Naive thymus-derived CD4-positive, alpha-beta T cell (primary cell): ENCODE measurements at regions of chr2 and their contacts with region 1.

Region 1: DNA sequence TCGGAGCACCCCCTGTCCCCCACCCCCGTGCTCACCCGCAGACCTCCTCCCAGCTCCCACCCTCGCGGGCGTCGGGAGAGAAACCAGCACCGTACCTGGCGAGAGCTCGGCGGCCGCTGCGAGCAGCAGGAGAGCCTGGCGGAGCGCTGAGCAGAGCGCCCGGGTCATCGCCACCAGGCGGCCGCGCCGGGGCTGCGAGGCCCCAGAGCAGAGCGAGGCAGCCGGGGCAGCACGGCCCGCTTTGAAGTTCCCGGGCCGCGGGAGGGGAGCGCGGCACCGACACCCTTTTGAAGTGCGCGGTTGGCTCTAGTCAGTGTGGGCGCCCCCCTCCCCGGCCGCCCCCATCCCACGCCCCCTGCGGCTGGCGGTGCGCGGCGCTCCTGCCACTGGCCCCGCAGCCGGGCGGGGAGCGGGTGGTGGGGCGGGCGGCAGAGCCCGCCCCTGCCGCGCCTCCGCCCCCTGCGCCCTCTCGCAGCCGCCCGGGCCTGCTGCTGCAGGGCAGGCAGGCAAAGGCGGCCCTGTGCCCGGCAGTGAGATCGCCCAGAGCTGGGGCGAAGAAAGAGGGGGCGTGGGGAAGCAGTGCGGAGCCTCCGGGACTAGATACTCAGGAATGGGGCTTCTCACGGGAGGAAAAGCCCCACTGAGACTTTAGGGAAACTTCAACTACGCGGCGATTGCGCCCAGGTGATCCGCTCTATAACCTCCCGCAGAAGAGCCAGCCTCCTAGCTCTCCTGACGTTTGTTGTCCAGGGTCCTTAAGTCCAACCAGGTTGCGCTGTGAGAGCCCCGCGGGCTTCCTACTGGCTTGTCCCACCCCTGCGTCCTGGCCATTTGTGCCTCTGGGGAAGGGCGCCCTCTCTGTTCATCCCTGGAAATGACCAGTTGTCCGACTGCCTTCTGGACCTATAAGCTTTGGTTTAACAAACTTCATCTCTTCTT is at the start of gene ACVR1C:
- DNase-seq: peak; percentile 55 to 78 (median 70)
- ATAC-seq: peak; percentile 86
- H3K4me3 ChIP-seq: peak within 1 kb of the TSS; percentile 85
- H3K4me3 Mint-ChIP-seq: peak within 1 kb of the TSS; percentile 91 to 99 (median 96)
- H3K27ac ChIP-seq: peak within 1 kb of the TSS; percentile 79
- H3K27ac Mint-ChIP-seq: peak within 1 kb of the TSS; percentile 78 to 94 (median 89)
- H3K4me1 ChIP-seq: peaks cover 4 to 24% of the 10 kb centered on the region in 2 donors
- H3K4me1 Mint-ChIP-seq: peaks cover 18 to 44% (median 39%) of the 10 kb centered on the region in 7 donors
- H3K27me3 ChIP-seq: no peaks in the 10 kb centered on the region
- H3K27me3 Mint-ChIP-seq: peaks cover 0 to 36% (median 0%) of the 10 kb centered on the region in 5 donors
- total RNA-seq, gene ACVR1C: 0.73 to 11.4 (median 8.9) TPM

Region 2: GRCh38 chr2:157327621-157328500 is 300.9 kb before region 1 on chr2:
- CTCF ChIA-PET with region 1: interaction called, 6 read pairs
- POLR2A ChIA-PET with region 1: interaction called, 5 read pairs
- intact Hi-C with region 1: loop called (anchors 1 to 2 kb)
- DNase-seq: peak; percentile 60 to 89 (median 81)
- ATAC-seq: peak; percentile 97
- H3K4me3 ChIP-seq: no peak overlapping the region
- H3K4me3 Mint-ChIP-seq: peak overlapping the region; percentile 47 to 81 (median 60)
- H3K27ac ChIP-seq: peak overlapping the region; percentile 19
- H3K27ac Mint-ChIP-seq: peak overlapping the region; percentile 18 to 96 (median 85)
- H3K4me1 ChIP-seq: peaks cover 23 to 46% of the 10 kb centered on the region in 2 donors
- H3K4me1 Mint-ChIP-seq: peaks cover 36 to 65% (median 58%) of the 10 kb centered on the region in 7 donors
- H3K27me3 ChIP-seq: no peaks in the 10 kb centered on the region
- H3K27me3 Mint-ChIP-seq: no peaks in the 10 kb centered on the region

Region 3: GRCh38 chr2:157492189-157492773 is 136.5 kb before region 1 on chr2:
- CTCF ChIA-PET with region 1: interaction called, 4 read pairs
- POLR2A ChIA-PET with region 1: no interaction called
- intact Hi-C with region 1: loop called (anchors 1 to 10 kb)
- DNase-seq: peak; percentile 41 to 79 (median 68)
- ATAC-seq: peak; percentile 91
- H3K4me3 ChIP-seq: no peak overlapping the region
- H3K4me3 Mint-ChIP-seq: peak overlapping the region in 6 of 10 donors; percentile 1 to 39 (median 14)
- H3K27ac ChIP-seq: no peak overlapping the region
- H3K27ac Mint-ChIP-seq: peak overlapping the region in 3 of 9 donors; percentile 9 to 19 (median 13)
- H3K4me1 ChIP-seq: peaks cover 0 to 21% of the 10 kb centered on the region in 2 donors
- H3K4me1 Mint-ChIP-seq: peaks cover 10 to 67% (median 59%) of the 10 kb centered on the region in 7 donors
- H3K27me3 ChIP-seq: no peaks in the 10 kb centered on the region
- H3K27me3 Mint-ChIP-seq: no peaks in the 10 kb centered on the region

Region 4: GRCh38 chr2:157603198-157603597 is 25.5 kb before region 1 on chr2:
- CTCF ChIA-PET with region 1: interaction called, 3 read pairs
- POLR2A ChIA-PET with region 1: interaction called, 3 read pairs
- intact Hi-C with region 1: loop called in 1 of 2 experiments (anchors 2 kb)
- DNase-seq: no peak
- ATAC-seq: no peak
- H3K4me3 ChIP-seq: no peak overlapping the region
- H3K4me3 Mint-ChIP-seq: no peak overlapping the region
- H3K27ac ChIP-seq: no peak overlapping the region
- H3K27ac Mint-ChIP-seq: no peak overlapping the region
- H3K4me1 ChIP-seq: no peaks in the 10 kb centered on the region
- H3K4me1 Mint-ChIP-seq: peaks cover 0 to 8% (median 0%) of the 10 kb centered on the region in 7 donors
- H3K27me3 ChIP-seq: no peaks in the 10 kb centered on the region
- H3K27me3 Mint-ChIP-seq: peaks cover 0 to 54% (median 0%) of the 10 kb centered on the region in 5 donors

Region 5: DNA sequence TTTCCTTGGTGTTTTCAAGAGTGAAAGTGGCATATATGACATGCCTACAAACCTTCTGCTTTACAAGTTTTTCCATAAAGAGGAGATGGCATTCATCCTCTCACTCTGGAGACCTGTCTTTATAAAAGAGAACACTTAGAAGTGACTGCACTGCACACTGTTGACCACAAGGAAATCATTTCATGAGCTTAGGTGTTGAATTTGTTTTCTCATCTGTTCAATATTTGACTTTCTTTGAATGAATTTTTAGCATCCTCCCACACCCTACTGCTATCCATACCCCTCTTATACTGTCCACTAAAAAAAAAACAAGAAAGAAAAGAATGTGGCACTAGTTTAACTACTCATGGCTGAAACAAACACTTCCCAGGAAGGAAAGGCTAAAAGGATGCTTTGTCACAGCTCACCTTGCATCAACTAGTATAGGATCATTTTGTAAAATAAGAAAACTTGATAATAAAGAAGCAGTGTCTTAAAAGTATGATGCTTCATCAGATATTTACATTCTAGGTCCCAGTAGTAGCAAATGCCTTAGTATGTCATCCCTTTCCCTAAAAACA is 164.4 kb after region 1 on chr2:
- CTCF ChIA-PET with region 1: no interaction called
- POLR2A ChIA-PET with region 1: no interaction called
- intact Hi-C with region 1: no loop called
- DNase-seq: no peak
- ATAC-seq: no peak
- H3K4me3 ChIP-seq: no peak overlapping the region
- H3K4me3 Mint-ChIP-seq: no peak overlapping the region
- H3K27ac ChIP-seq: no peak overlapping the region
- H3K27ac Mint-ChIP-seq: peak overlapping the region in 1 of 9 donors; percentile 10
- H3K4me1 ChIP-seq: no peaks in the 10 kb centered on the region
- H3K4me1 Mint-ChIP-seq: peaks cover 1 to 19% (median 4%) of the 10 kb centered on the region in 7 donors
- H3K27me3 ChIP-seq: no peaks in the 10 kb centered on the region
- H3K27me3 Mint-ChIP-seq: no peaks in the 10 kb centered on the region

Region 6: DNA sequence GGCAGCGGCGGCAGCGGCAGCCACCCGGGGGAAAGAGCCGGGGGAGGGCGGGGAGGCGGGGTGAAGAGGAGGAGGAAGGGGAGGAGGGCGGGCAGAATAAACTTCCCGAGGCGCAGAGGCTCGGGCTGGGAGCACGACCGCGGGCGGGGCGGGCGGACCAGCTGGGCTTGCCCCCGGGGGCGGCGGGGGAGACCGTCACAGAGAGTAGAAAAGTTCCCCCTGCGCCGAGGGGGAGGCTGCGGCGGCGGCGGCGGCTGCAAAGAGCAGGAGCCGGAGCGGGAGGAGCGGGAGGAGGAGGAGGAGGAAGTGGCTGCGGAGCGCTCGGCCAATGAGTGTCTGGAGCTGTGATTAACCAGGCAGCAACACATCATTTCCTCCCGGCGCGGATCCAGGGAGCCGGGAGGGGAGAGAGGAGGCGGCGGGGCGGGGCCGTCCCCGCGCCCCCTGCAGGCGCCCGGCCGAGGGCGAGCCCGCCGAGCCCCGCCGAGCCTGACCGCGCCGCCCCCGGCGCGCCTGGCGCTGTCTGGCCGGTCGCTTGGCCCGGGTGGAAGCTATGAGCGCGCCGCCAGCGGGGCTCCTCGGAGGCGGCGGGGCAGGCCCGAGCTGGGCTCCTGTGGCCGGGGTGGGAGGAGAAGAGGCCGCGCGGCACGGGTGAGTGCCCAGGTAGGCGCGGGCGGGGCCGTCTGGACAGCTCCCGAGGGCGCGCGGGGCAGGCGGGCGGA is 247.5 kb after region 1 on chr2 and contains the start of gene ACVR1:
- CTCF ChIA-PET with region 1: interaction called, 3 read pairs
- POLR2A ChIA-PET with region 1: interaction called, 7 read pairs
- intact Hi-C with region 1: loop called (anchors 1 to 5 kb)
- DNase-seq: peak; percentile 68 to 85 (median 75)
- ATAC-seq: peak; percentile 86
- H3K4me3 ChIP-seq: peak within 1 kb of the TSS; percentile 60
- H3K4me3 Mint-ChIP-seq: peak within 1 kb of the TSS; percentile 90 to 98 (median 96)
- H3K27ac ChIP-seq: peak within 1 kb of the TSS; percentile 77
- H3K27ac Mint-ChIP-seq: peak within 1 kb of the TSS; percentile 83 to 96 (median 90)
- H3K4me1 ChIP-seq: peaks cover 12 to 19% of the 10 kb centered on the region in 2 donors
- H3K4me1 Mint-ChIP-seq: peaks cover 24 to 63% (median 53%) of the 10 kb centered on the region in 7 donors
- H3K27me3 ChIP-seq: no peaks in the 10 kb centered on the region
- H3K27me3 Mint-ChIP-seq: no peaks in the 10 kb centered on the region
- total RNA-seq, gene ACVR1: 13.3 to 42.0 (median 20.6) TPM

Region 7: DNA sequence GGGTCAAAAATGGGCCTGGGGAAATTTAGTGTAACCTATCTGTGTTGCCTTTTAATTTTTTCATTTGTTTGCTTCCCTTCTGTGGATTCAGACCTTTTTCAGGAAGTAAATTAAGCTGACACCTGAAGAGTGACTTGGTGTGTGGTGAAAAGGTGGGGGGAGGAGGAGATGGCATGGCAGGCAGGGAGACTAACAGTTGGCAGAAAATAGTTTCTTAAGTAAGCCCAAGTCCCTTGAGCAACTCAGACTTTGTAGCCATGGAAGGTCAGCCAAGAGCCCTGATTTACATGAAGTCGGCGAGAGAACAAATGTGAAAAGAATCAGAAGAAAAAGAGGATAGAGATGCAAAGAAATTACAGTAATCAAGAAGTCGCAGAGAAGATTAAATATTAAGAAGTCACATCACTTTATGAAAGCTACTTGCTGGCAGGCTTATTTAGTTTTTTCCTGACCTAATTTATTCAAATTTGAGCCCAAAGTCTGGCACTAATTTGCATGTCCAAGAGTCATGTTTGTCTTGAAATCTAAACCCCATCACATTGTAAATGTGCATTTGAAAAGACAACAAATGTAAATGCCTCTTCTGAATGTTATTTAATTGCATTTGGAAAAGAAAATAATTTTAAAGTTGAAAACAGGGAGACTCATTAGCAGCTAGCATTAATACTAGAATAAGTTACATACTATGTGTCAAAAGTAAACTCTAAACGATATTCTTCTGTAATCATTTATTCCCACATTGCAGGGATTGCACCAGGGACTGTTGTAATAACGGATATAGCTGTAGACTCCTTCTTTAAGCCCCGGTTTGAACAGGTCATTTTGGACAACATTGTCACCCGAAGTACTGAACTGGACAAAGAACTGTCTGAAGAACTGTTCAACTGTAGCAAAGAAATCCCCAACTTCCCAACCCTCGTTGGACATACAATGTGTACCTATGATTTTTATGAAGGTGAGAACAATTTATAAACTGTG is 492.2 kb after region 1 on chr2:
- CTCF ChIA-PET with region 1: no interaction called
- POLR2A ChIA-PET with region 1: no interaction called
- intact Hi-C with region 1: no loop called
- DNase-seq: no peak
- ATAC-seq: no peak
- H3K4me3 ChIP-seq: no peak overlapping the region
- H3K4me3 Mint-ChIP-seq: no peak overlapping the region
- H3K27ac ChIP-seq: no peak overlapping the region
- H3K27ac Mint-ChIP-seq: no peak overlapping the region
- H3K4me1 ChIP-seq: no peaks in the 10 kb centered on the region
- H3K4me1 Mint-ChIP-seq: peaks cover 0 to 4% (median 0%) of the 10 kb centered on the region in 7 donors
- H3K27me3 ChIP-seq: no peaks in the 10 kb centered on the region
- H3K27me3 Mint-ChIP-seq: peaks cover 0 to 7% (median 5%) of the 10 kb centered on the region in 5 donors